Activated CD4-positive, alpha-beta memory T cell treated with anti-CD3 and anti-CD28 coated beads for 36 hours (primary cell): ENCODE measurements at regions of chr13 and their contacts with region 1.

Region 1: GRCh38 chr13:51286135-51287002 is 53.1 kb upstream of the SERPINE3 start:
- DNase-seq: peak; percentile 85
- H3K4me3 Mint-ChIP-seq: no peak overlapping the region
- H3K27ac Mint-ChIP-seq: no peak overlapping the region
- H3K4me1 Mint-ChIP-seq: no peaks in the 10 kb centered on the region
- H3K27me3 Mint-ChIP-seq: no peaks in the 10 kb centered on the region

Region 2: DNA sequence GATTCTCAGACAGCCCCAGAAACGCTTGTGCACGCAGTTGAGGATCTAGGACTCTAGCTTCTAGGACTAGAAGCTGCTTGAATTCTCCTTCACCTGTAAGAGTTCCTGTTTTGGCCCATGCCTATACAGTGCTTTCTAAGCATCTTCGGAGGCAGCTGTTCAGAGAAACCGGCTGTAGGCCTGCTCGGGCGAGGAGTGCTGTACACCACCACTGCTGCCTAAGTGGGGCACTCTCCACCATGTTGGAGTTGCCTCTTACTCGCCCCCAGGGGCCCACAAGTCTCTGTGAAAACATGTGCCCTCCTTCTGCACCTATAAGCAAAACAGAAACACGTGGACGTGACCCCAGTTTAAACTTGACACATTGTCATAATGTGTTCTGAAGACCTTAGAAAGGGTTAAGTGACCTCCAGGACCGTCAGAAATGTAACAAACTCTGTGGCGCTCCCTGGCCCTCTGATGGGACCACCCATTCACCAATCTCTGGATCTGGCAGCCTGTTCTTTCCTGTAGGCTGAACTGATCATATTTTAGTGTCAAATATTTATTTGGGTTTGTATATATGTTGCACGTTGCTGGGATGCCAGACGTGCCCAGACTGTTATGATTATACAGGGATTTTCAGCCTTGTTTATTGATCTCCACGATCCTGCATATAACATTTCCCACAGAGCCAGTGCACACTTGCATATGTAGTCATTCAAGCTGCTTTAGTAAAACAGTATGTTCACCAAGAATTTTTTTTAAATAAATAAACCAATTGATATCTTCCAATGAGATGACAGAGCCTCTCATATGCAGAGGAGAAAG is 236.1 kb before region 1 on chr13:
- CTCF ChIA-PET with region 1: no interaction called
- POLR2A ChIA-PET with region 1: no interaction called
- intact Hi-C with region 1: no loop called
- DNase-seq: no peak
- H3K4me3 Mint-ChIP-seq: no peak overlapping the region
- H3K27ac Mint-ChIP-seq: no peak overlapping the region
- H3K4me1 Mint-ChIP-seq: no peaks in the 10 kb centered on the region
- H3K27me3 Mint-ChIP-seq: no peaks in the 10 kb centered on the region

Region 3: GRCh38 chr13:51148952-51149573 is 137.3 kb before region 1 on chr13:
- CTCF ChIA-PET with region 1: interaction called, 54 read pairs
- POLR2A ChIA-PET with region 1: no interaction called
- intact Hi-C with region 1: no loop called
- DNase-seq: no peak
- H3K4me3 Mint-ChIP-seq: no peak overlapping the region
- H3K27ac Mint-ChIP-seq: no peak overlapping the region
- H3K4me1 Mint-ChIP-seq: peaks cover 4% of the 10 kb centered on the region
- H3K27me3 Mint-ChIP-seq: peaks cover 28% of the 10 kb centered on the region

Region 4: GRCh38 chr13:51235756-51236490 is 50.4 kb before region 1 on chr13:
- CTCF ChIA-PET with region 1: interaction called, 10 read pairs
- POLR2A ChIA-PET with region 1: no interaction called
- intact Hi-C with region 1: no loop called
- DNase-seq: no peak
- H3K4me3 Mint-ChIP-seq: no peak overlapping the region
- H3K27ac Mint-ChIP-seq: no peak overlapping the region
- H3K4me1 Mint-ChIP-seq: no peaks in the 10 kb centered on the region
- H3K27me3 Mint-ChIP-seq: peaks cover 17% of the 10 kb centered on the region

Region 5: GRCh38 chr13:51262501-51263211 is 23.7 kb before region 1 on chr13:
- CTCF ChIA-PET with region 1: interaction called, 13 read pairs
- POLR2A ChIA-PET with region 1: no interaction called
- intact Hi-C with region 1: no loop called
- DNase-seq: no peak
- H3K4me3 Mint-ChIP-seq: no peak overlapping the region
- H3K27ac Mint-ChIP-seq: no peak overlapping the region
- H3K4me1 Mint-ChIP-seq: no peaks in the 10 kb centered on the region
- H3K27me3 Mint-ChIP-seq: peaks cover 3% of the 10 kb centered on the region

Region 6: GRCh38 chr13:51297556-51297955 is 11.2 kb after region 1 on chr13:
- CTCF ChIA-PET with region 1: interaction called, 34 read pairs
- POLR2A ChIA-PET with region 1: no interaction called
- intact Hi-C with region 1: no loop called
- DNase-seq: no peak
- H3K4me3 Mint-ChIP-seq: no peak overlapping the region
- H3K27ac Mint-ChIP-seq: no peak overlapping the region
- H3K4me1 Mint-ChIP-seq: no peaks in the 10 kb centered on the region
- H3K27me3 Mint-ChIP-seq: peaks cover 5% of the 10 kb centered on the region

Region 7: GRCh38 chr13:51523082-51523518 is 236.7 kb after region 1 on chr13:
- CTCF ChIA-PET with region 1: no interaction called
- POLR2A ChIA-PET with region 1: no interaction called
- intact Hi-C with region 1: no loop called
- DNase-seq: peak; percentile 50
- H3K4me3 Mint-ChIP-seq: no peak overlapping the region
- H3K27ac Mint-ChIP-seq: no peak overlapping the region
- H3K4me1 Mint-ChIP-seq: peaks cover 16% of the 10 kb centered on the region
- H3K27me3 Mint-ChIP-seq: no peaks in the 10 kb centered on the region